Gastrocnemius medialis (tissue), 4 donors: ENCODE measurements at regions of chr13 and their contacts with region 1.

Region 1: GRCh38 chr13:54357284-54357933 is 1328.8 kb downstream of the OLFM4 start:
- DNase-seq: no peak
- ATAC-seq: no peak
- H3K4me3 ChIP-seq: no peak overlapping the region
- H3K27ac ChIP-seq: no peak overlapping the region
- H3K4me1 ChIP-seq: no peaks in the 10 kb centered on the region
- H3K27me3 ChIP-seq: no peaks in the 10 kb centered on the region
- CTCF ChIP-seq: no peak
- POLR2A ChIP-seq: no peak

Region 2: DNA sequence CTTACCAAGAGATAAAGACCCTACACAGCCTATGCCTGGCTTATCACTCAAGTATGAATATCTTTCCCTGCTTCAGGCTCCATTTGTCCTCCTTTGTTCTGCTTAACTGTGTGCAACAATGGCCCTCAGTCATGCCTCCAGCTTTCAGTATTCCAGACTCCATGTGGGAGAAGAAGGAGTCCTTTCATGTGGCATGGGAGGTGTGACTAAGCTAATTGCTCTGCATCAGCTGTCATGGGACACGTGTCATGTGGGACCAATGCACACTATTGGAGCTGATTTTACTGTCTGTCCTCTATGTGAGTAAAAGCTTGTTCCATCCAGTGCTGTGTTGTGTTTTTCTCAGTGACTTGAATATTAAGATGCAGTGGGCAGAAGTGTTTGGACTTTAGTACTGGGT is 130.5 kb before region 1 on chr13:
- in situ Hi-C with region 1: no loop called
- intact Hi-C with region 1: no loop called
- DNase-seq: no peak
- ATAC-seq: no peak
- H3K4me3 ChIP-seq: no peak overlapping the region
- H3K27ac ChIP-seq: no peak overlapping the region
- H3K4me1 ChIP-seq: no peaks in the 10 kb centered on the region
- H3K27me3 ChIP-seq: no peaks in the 10 kb centered on the region
- CTCF ChIP-seq: no peak
- POLR2A ChIP-seq: no peak

Region 3: GRCh38 chr13:54287062-54287764 is 70.2 kb before region 1 on chr13:
- in situ Hi-C with region 1: no loop called
- intact Hi-C with region 1: no loop called
- DNase-seq: no peak
- ATAC-seq: no peak
- H3K4me3 ChIP-seq: no peak overlapping the region
- H3K27ac ChIP-seq: no peak overlapping the region
- H3K4me1 ChIP-seq: no peaks in the 10 kb centered on the region
- H3K27me3 ChIP-seq: no peaks in the 10 kb centered on the region
- CTCF ChIP-seq: no peak
- POLR2A ChIP-seq: no peak

Region 4: GRCh38 chr13:54709572-54709971 is 352.2 kb after region 1 on chr13:
- in situ Hi-C with region 1: no loop called
- intact Hi-C with region 1: loop called (anchors 5 kb)
- DNase-seq: no peak
- ATAC-seq: no peak
- H3K4me3 ChIP-seq: no peak overlapping the region
- H3K27ac ChIP-seq: no peak overlapping the region
- H3K4me1 ChIP-seq: no peaks in the 10 kb centered on the region
- H3K27me3 ChIP-seq: no peaks in the 10 kb centered on the region
- CTCF ChIP-seq: no peak
- POLR2A ChIP-seq: no peak